AG04449 (cell line): ENCODE measurements at regions of chr18 and their contacts with region 1.

Region 1: DNA sequence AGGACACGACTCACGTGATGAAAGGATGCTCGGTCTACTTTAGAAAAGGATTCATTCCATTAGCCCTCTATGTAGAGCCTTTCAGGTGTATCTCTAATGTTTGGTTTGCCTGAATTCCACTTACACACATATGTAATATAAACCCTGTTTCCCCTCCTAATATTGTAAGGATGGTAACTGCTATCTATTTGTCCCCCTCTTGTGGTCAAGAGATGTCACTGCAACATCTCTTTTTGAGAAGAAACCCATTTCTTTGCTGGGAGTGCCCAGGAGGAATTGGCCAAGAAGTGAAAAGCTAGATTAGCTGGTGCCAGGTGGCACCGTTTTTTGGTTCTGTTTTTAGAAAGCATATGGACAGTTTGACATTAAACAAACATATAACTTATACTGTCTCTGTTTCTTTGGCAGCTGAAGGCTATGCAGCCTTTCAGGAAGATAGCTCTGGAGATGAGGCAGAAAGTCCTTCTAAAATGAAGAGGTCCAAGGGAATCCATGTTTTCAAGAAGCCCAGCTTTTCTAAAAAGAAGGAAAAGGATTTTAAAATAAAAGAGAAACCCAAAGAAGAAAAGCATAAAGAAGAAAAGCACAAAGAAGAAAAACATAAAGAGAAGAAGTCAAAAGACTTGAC is 41.2 kb downstream of the RALBP1 start:
- DNase-seq: no peak
- H3K4me3 ChIP-seq: no peak overlapping the region
- CTCF ChIP-seq: peak; percentile 59

Region 2: DNA sequence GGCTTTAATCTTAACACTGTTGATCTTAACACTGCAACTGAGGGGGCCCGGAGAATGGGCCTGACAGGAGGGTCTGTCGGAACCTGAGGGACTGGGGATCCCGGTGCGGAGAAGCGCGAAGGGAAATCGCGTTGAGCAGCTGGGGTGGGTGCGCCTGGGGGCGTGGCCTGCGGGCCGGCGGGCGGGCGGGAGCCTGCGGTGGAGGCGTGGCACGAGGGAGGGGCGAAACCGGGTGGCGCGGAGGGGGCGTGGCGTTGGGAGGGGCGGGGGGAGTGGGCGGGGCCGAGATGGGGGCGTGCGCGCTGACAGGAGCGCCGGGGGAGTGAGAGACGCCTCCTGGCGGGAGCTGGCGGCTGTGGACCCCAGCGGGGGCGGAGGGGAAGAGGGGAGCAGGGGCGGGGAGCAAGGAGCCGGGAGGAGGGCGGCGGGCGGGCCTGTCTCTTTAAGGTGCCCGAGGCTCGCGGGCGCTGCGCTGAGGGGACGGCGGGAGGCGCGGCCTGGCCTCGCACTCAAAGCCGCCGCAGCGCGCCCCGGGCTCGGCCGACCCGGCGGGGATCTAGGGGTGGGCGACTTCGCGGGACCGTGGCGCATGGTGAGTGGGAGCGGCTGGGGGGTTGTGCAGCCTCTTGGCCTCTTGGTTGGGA is 182.1 kb before region 1 on chr18 and contains the start of gene TWSG1:
- CTCF ChIA-PET with region 1: interaction called, 27 read pairs
- POLR2A ChIA-PET with region 1: no interaction called
- DNase-seq: peak; percentile 61
- H3K4me3 ChIP-seq: peak within 1 kb of the TSS; percentile 79
- CTCF ChIP-seq: peak; percentile 74

Region 3: GRCh38 chr18:9354256-9354655 is 162.3 kb before region 1 on chr18:
- CTCF ChIA-PET with region 1: interaction called, 10 read pairs
- POLR2A ChIA-PET with region 1: no interaction called
- DNase-seq: no peak
- H3K4me3 ChIP-seq: no peak overlapping the region
- CTCF ChIP-seq: no peak

Region 4: GRCh38 chr18:9494766-9495331 is 21.7 kb before region 1 on chr18:
- CTCF ChIA-PET with region 1: interaction called, 11 read pairs
- POLR2A ChIA-PET with region 1: no interaction called
- DNase-seq: no peak
- H3K4me3 ChIP-seq: no peak overlapping the region
- CTCF ChIP-seq: no peak

Region 5: GRCh38 chr18:9506046-9506792 is 10.3 kb before region 1 on chr18:
- CTCF ChIA-PET with region 1: interaction called, 18 read pairs
- POLR2A ChIA-PET with region 1: no interaction called
- DNase-seq: no peak
- H3K4me3 ChIP-seq: no peak overlapping the region
- CTCF ChIP-seq: no peak

Region 6: GRCh38 chr18:9530231-9531009 is 13.9 kb after region 1 on chr18:
- CTCF ChIA-PET with region 1: interaction called, 22 read pairs
- POLR2A ChIA-PET with region 1: no interaction called
- DNase-seq: no peak
- H3K4me3 ChIP-seq: no peak overlapping the region
- CTCF ChIP-seq: no peak